Aorta (tissue), 5 donors: ENCODE measurements at regions of chr6 and their contacts with region 1.

Region 1: DNA sequence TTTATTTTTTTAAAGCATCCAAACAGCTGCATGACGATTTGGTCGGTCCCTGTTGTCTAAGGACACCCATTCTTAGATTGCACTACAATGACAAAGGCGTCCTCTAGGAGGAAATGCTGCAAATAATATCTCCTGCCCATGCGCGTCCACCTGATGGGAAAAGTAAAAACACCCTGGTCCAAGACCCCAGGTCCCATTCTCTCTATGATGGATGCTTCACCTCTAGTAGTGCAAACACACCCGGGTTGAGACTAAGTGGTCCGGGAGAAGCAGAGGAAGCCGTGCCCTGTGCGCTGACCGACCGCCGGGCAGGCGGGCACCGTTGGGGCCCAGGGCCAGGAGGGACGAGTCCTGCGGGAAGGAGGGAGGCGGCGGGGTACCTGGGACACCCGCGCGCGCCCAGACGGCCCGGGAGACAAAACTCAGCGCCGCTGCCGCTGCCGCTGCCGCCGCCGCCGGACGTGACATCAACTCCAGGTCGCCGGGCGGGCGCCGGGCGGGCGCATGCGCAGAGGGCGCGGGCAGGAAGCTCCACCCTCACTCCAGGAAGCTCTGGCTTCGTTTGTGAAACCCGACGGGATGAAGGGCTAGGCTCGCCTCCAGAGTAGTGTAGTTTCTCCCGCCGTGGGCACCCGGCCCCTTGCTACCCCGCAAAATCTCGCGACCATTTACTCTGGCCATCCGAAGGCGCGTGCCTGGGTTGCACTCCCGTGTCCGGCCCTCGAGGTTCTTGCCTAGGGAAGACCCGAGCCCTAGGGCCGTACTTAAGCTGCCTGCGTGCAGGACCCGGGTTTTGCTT is at the start of gene TBC1D7:
- DNase-seq: peak; percentile 96 to 97
- ATAC-seq: peak; percentile 97
- H3K4me3 ChIP-seq: peak within 1 kb of the TSS; percentile 82 to 92
- H3K27ac ChIP-seq: peak within 1 kb of the TSS; percentile 23 to 89
- H3K4me1 ChIP-seq: no peaks in the 10 kb centered on the region
- H3K27me3 ChIP-seq: no peaks in the 10 kb centered on the region
- total RNA-seq, gene TBC1D7: 9.9 to 11.6 TPM

Region 2: DNA sequence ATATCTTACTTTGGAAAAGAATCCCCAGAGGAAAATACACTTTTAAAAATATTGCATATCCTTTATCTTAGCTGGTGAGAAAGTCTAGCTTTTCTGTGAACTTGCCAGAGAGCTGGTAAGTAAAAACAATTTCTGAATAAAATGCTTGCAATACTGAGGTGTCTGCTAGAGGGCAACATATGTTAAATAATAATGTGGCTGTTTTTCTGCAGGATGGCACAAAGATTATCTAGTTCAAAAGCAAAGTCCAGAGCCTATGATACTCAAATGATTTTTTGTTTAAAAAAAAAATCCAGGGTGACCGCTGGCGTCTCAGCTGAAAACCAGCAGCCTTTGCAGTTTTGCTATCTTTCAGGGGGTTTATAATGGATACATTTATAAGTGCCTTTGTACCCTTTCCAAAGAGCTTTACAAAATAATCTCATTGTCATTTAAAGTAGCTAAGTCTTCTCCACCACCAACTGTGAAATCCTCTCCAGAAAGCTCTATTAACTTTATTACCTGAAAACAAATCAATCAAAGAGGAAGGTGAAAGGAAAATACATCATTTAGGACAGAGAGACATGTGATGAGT is 416.8 kb before region 1 on chr6:
- intact Hi-C with region 1: loop called (anchors 2 to 5 kb)
- DNase-seq: no peak
- ATAC-seq: no peak
- H3K4me3 ChIP-seq: no peak overlapping the region
- H3K27ac ChIP-seq: no peak overlapping the region
- H3K4me1 ChIP-seq: no peaks in the 10 kb centered on the region
- H3K27me3 ChIP-seq: no peaks in the 10 kb centered on the region

Region 3: GRCh38 chr6:12957321-12958051 is 370.8 kb before region 1 on chr6:
- intact Hi-C with region 1: loop called in 1 of 2 experiments (anchors 2 kb)
- DNase-seq: peak; percentile 90 to 91
- ATAC-seq: peak; percentile 92
- H3K4me3 ChIP-seq: peak overlapping the region; percentile 45 to 100
- H3K27ac ChIP-seq: peak overlapping the region in 1 of 2 donors; percentile 65
- H3K4me1 ChIP-seq: peaks cover 0 to 4% of the 10 kb centered on the region in 2 donors
- H3K27me3 ChIP-seq: no peaks in the 10 kb centered on the region

Region 4: GRCh38 chr6:13229205-13230085 is 98.8 kb before region 1 on chr6:
- intact Hi-C with region 1: loop called in 1 of 2 experiments (anchors 5 kb)
- DNase-seq: no peak
- ATAC-seq: no peak
- H3K4me3 ChIP-seq: no peak overlapping the region
- H3K27ac ChIP-seq: no peak overlapping the region
- H3K4me1 ChIP-seq: peaks cover 5% of the 10 kb centered on the region in 2 donors
- H3K27me3 ChIP-seq: no peaks in the 10 kb centered on the region